Activated naive CD8-positive, alpha-beta T cell treated with anti-CD3 and anti-CD28 coated beads, Interleukin-2, amount 10 ng/mL, durations not matched to agents 7 days and 5 days (primary cell): ENCODE measurements at regions of chr2 and their contacts with region 1.

Region 1: GRCh38 chr2:156332534-156333273 is at the start of gene NR4A2:
- DNase-seq: peak; percentile 84
- ATAC-seq: peak; percentile 65
- H3K4me3 Mint-ChIP-seq: peak within 1 kb of the TSS; percentile 88
- H3K27ac Mint-ChIP-seq: peak within 1 kb of the TSS; percentile 81
- H3K4me1 Mint-ChIP-seq: peaks cover 39% of the 10 kb centered on the region
- H3K27me3 Mint-ChIP-seq: peaks cover 27% of the 10 kb centered on the region
- total RNA-seq, gene NR4A2: 3.0 to 3.2 TPM

Region 2: DNA sequence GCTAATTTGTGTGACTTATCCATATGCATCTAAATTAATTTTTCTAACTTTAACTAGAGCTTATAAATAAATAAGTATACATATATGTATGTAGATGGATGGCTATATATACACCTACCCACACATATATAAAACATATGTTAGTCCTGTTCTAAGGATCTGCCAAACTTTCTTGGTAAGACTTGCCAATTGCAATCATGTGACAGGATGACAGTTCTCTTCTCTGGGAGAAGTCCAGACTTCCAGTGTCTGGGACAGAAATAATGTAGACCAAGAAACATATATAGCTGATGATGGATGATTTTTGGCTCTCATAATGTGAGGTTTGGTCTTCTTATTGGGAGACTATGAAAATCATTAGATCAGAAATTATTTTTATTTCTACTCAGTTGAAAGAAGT is 30.4 kb after region 1 on chr2:
- POLR2A ChIA-PET with region 1: no interaction called
- DNase-seq: no peak
- ATAC-seq: no peak
- H3K4me3 Mint-ChIP-seq: no peak overlapping the region
- H3K27ac Mint-ChIP-seq: no peak overlapping the region
- H3K4me1 Mint-ChIP-seq: no peaks in the 10 kb centered on the region
- H3K27me3 Mint-ChIP-seq: no peaks in the 10 kb centered on the region

Region 3: DNA sequence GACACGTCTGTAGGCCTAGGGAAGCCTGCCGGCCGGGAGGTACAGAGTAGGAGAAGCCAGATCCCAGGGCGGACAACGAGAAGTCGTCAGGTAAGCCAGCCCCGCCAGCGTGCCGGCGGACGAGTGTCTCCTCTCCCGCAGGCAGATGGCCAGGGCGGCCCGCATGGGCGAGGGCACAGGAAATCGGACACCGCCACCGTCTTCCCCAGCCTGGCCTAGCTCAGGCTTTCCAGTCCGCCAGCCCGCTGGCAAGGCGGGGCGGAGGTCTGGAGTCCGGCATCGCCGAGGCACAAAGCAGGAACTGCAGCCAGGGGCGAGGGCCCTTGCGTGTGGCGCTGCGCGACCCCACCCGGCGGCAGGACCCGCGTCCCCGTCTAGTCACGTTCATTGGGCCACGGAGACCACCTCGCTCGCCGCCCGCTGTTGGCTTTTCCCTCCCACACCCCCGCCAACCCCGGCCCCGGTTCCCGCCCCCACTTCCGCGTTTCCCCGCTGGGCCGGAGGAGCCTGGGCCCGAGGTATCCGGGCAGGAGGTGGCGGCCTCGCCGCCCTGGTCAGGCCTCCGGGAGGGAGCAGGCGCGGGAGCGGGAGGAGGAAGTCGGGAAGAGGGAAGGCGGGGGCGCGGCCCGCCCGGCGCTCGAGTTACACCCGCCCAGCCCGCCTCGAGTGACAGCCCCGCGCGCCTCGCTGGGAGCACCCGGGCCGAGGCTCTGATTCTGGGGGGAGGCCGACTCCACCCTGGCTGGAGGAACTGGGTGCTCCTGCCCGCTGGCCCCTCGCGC is 103.2 kb after region 1 on chr2 and contains the start of gene GPD2:
- POLR2A ChIA-PET with region 1: interaction called, 10 read pairs
- DNase-seq: peak; percentile 77
- ATAC-seq: peak; percentile 78
- H3K4me3 Mint-ChIP-seq: peak within 1 kb of the TSS; percentile 99
- H3K27ac Mint-ChIP-seq: peak within 1 kb of the TSS; percentile 95
- H3K4me1 Mint-ChIP-seq: peaks cover 29% of the 10 kb centered on the region
- H3K27me3 Mint-ChIP-seq: peaks cover 3% of the 10 kb centered on the region
- total RNA-seq, gene GPD2: 16.8 to 19.8 TPM

Region 4: GRCh38 chr2:156548413-156548812 is 215.7 kb after region 1 on chr2:
- POLR2A ChIA-PET with region 1: no interaction called
- DNase-seq: no peak
- ATAC-seq: no peak
- H3K4me3 Mint-ChIP-seq: no peak overlapping the region
- H3K27ac Mint-ChIP-seq: no peak overlapping the region
- H3K4me1 Mint-ChIP-seq: no peaks in the 10 kb centered on the region
- H3K27me3 Mint-ChIP-seq: no peaks in the 10 kb centered on the region